AG04449 (cell line): ENCODE measurements at regions of chr1 and their contacts with region 1.

Region 1: GRCh38 chr1:153990468-153991150 is at the start of gene RPS27:
- DNase-seq: peak; percentile 88
- H3K4me3 ChIP-seq: peak within 1 kb of the TSS; percentile 69
- CTCF ChIP-seq: no peak

Region 2: DNA sequence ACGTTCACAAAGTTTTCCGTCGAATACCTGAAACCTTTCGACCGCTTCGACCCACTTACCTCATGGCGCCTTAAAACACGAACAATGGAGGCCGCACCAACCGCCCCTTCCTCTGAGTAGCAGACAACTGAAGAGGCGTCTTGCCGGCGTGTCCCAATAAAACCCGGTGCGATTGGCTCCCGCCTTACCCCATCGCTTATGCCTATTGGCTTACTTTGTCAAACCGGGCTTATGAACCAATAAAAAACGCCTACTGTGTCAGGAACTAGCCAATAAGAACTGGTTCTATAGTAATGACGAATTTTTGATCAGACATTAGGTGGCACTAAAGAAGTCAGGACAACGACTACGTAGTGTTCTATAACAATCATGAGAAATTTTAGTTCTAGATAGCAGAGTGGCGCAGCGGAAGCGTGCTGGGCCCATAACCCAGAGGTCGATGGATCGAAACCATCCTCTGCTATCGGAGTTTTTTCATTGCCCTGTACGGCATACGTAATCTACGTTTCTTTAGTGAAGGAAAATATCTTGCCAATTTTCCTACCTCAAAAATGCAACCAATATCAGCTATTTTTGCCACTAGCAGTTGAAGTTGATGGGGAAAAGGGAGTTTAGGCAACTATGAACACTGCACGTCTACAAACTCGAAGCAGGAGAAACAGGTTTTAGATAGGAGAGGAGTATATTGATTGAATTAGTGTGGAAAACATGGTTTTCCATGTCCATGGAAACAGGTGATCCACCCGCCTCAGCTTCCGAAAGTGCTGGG is 319.6 kb before region 1 on chr1 and contains the start of gene ILF2:
- CTCF ChIA-PET with region 1: interaction called, 71 read pairs
- POLR2A ChIA-PET with region 1: interaction called, 4 read pairs
- DNase-seq: peak; percentile 100
- H3K4me3 ChIP-seq: peak within 1 kb of the TSS; percentile 89
- CTCF ChIP-seq: peak; percentile 3

Region 3: DNA sequence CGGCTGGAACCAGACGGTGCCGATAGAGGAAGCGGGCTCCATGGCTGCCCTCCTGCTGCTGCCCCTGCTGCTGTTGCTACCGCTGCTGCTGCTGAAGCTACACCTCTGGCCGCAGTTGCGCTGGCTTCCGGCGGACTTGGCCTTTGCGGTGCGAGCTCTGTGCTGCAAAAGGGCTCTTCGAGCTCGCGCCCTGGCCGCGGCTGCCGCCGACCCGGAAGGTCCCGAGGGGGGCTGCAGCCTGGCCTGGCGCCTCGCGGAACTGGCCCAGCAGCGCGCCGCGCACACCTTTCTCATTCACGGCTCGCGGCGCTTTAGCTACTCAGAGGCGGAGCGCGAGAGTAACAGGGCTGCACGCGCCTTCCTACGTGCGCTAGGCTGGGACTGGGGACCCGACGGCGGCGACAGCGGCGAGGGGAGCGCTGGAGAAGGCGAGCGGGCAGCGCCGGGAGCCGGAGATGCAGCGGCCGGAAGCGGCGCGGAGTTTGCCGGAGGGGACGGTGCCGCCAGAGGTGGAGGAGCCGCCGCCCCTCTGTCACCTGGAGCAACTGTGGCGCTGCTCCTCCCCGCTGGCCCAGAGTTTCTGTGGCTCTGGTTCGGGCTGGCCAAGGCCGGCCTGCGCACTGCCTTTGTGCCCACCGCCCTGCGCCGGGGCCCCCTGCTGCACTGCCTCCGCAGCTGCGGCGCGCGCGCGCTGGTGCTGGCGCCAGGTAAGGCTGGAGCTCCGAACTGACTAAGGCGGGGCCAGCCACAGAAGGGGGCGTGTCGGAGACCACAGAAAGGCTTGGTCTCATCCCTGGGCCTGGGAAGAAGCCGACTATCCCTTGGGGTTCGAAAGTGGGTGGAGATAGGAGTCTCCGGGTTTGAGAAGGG is 214.9 kb before region 1 on chr1:
- CTCF ChIA-PET with region 1: interaction called, 15 read pairs
- POLR2A ChIA-PET with region 1: interaction called, 4 read pairs
- DNase-seq: no peak
- H3K4me3 ChIP-seq: peak overlapping the region; percentile 64
- CTCF ChIP-seq: no peak

Region 4: DNA sequence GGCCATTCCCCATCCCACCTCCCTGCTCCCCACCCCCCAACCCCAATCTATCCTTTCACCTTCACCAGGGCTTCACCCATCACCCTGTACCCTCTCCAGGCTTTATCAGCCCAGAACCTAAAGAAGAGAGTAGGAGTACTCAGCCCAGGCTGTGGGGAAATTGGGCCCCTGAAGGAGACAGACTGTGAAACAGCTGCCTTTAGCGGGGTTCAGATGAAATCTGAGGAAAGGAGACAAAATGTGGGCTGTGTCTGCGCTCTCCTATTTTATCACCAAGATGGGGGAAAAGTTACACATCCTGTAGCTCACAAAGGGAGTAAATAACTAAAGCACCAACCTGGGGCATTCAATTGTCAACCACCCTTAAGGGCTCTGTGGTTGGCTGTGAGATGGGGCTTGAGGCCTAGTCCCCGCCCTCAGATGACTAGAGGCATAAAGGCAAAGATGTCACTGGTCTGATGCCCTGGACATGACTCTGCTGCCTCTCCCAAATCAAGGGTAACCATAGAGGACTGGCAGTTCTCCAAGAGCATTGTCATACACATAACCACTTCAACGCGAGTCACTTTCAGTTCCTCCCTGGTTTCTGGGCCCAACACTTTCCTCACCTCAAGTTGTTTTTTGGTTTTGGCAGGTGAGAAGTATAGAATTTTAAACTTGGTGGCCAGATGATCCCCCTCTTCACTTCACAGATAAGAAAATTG is 185.4 kb before region 1 on chr1:
- CTCF ChIA-PET with region 1: interaction called, 88 read pairs
- POLR2A ChIA-PET with region 1: interaction called, 5 read pairs
- DNase-seq: no peak
- H3K4me3 ChIP-seq: no peak overlapping the region
- CTCF ChIP-seq: no peak

Region 5: GRCh38 chr1:153849487-153850185 is 141.0 kb before region 1 on chr1:
- CTCF ChIA-PET with region 1: no interaction called
- POLR2A ChIA-PET with region 1: no interaction called
- DNase-seq: no peak
- H3K4me3 ChIP-seq: no peak overlapping the region
- CTCF ChIP-seq: no peak

Region 6: GRCh38 chr1:153946622-153947241 is 43.9 kb before region 1 on chr1 and contains the start of gene DENND4B:
- CTCF ChIA-PET with region 1: interaction called, 12 read pairs
- POLR2A ChIA-PET with region 1: interaction called, 11 read pairs
- DNase-seq: no peak
- H3K4me3 ChIP-seq: peak within 1 kb of the TSS; percentile 77
- CTCF ChIP-seq: peak; percentile 98

Region 7: DNA sequence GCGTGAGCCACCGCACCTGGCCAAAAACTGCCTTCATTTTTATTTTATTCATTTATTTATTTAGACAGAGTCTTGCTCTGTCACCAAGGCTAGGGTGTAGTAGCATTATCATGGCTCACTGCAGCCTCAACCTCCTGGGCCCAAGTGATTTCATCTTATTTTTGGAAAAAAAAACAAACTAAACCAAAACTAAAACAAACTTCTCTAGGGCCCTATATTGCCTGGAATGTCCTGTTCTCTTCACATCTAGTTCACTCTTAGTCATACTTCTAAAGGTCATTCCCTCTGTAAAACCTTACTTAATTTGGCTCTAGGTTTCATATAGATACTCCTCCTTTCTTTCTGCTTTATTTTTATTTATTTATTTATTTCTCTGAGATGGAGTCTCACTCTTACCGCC is 15.5 kb after region 1 on chr1:
- CTCF ChIA-PET with region 1: interaction called, 3 read pairs
- POLR2A ChIA-PET with region 1: interaction called, 16 read pairs
- DNase-seq: peak; percentile 45
- H3K4me3 ChIP-seq: no peak overlapping the region
- CTCF ChIP-seq: no peak